MCF 10A (cell line): ENCODE measurements at regions of chr14 and their contacts with region 1.

Region 1: GRCh38 chr14:98957211-98958047 is 314.6 kb downstream of the BCL11B start:
- DNase-seq: peak; percentile 99
- H3K4me3 Mint-ChIP-seq: peak overlapping the region; percentile 70
- H3K27ac Mint-ChIP-seq: peak overlapping the region; percentile 82
- H3K4me1 Mint-ChIP-seq: peaks cover 51% of the 10 kb centered on the region
- H3K27me3 Mint-ChIP-seq: peaks cover 15% of the 10 kb centered on the region
- CTCF ChIP-seq: no peak

Region 2: DNA sequence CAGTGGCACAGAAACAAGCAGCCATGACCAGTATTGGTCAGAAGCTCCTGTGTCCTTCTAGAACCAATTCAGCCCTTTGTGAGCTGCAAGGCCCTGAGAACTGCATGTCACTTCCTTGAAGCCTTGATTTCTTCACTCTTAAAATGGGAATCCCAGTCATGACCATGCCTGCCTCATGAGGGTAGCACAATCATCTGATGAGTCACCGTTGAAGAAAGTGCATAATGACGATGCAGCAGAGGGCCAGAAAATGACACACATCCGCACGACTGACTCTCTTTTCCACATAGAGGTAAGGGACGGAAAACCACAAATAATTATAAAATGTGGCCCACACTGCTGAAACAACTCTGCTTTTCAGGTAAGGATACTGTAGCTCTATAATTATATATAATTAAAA is 462.8 kb before region 1 on chr14:
- CTCF ChIA-PET with region 1: no interaction called
- POLR2A ChIA-PET with region 1: interaction called, 7 read pairs
- intact Hi-C with region 1: loop called (anchors 5 kb)
- DNase-seq: peak; percentile 83
- H3K4me3 Mint-ChIP-seq: no peak overlapping the region
- H3K27ac Mint-ChIP-seq: peak overlapping the region; percentile 77
- H3K4me1 Mint-ChIP-seq: peaks cover 45% of the 10 kb centered on the region
- H3K27me3 Mint-ChIP-seq: no peaks in the 10 kb centered on the region
- CTCF ChIP-seq: no peak

Region 3: GRCh38 chr14:98906123-98906995 is 51.1 kb before region 1 on chr14:
- CTCF ChIA-PET with region 1: interaction called, 3 read pairs
- POLR2A ChIA-PET with region 1: interaction called, 36 read pairs
- intact Hi-C with region 1: loop called (anchors 2 kb)
- DNase-seq: peak; percentile 96
- H3K4me3 Mint-ChIP-seq: peak overlapping the region; percentile 28
- H3K27ac Mint-ChIP-seq: peak overlapping the region; percentile 80
- H3K4me1 Mint-ChIP-seq: peaks cover 52% of the 10 kb centered on the region
- H3K27me3 Mint-ChIP-seq: no peaks in the 10 kb centered on the region
- CTCF ChIP-seq: no peak

Region 4: GRCh38 chr14:99015833-99016232 is 58.4 kb after region 1 on chr14:
- CTCF ChIA-PET with region 1: no interaction called
- POLR2A ChIA-PET with region 1: no interaction called
- intact Hi-C with region 1: no loop called
- DNase-seq: no peak
- H3K4me3 Mint-ChIP-seq: no peak overlapping the region
- H3K27ac Mint-ChIP-seq: no peak overlapping the region
- H3K4me1 Mint-ChIP-seq: peaks cover 9% of the 10 kb centered on the region
- H3K27me3 Mint-ChIP-seq: no peaks in the 10 kb centered on the region
- CTCF ChIP-seq: no peak

Region 5: DNA sequence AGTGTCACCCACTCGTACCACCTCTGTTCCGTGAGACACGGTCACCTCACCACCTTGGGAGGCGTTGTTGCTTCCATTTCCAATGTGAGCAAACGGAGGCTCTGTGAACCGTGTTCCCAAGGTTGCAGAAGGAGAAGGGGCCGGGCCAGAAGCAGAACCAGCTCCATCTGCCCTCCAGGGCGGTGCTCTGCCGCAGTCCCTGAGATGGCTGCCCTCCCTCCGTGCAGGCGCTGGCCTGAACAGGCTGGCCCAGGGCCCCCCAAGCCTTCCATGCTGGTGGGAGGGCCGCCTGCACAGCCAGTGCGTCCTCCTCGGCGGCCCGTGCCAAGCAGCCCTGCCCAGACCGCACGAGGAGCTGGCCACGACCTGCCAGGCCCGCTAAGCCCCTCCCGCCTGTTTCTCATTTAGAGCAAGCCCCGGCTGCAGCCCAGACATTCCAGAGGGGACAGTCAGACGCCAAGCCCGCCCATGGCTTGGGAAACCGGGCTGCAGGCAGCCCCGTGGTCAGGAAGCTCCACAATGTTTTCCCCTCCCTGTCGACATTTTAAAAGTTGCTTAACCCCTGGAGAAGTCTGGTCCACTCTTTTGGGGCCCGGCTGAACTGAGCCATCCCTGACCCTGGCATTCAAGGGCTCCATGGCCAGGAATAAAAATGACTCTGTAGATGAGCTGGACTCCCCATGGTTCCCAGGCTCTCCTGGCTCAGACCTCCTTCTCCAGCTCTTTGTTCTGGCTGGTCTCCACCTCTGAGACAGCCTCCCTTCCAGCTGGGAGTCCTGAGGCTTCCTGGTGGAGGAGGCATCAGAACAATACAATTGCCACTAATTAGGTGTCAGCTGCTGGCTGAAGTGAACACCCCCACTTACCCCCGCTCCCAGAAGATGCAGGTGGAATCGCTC is 78.5 kb after region 1 on chr14:
- CTCF ChIA-PET with region 1: interaction called, 5 read pairs
- POLR2A ChIA-PET with region 1: interaction called, 14 read pairs
- intact Hi-C with region 1: loop called (anchors 5 kb)
- DNase-seq: peak; percentile 96
- H3K4me3 Mint-ChIP-seq: peak overlapping the region; percentile 25
- H3K27ac Mint-ChIP-seq: peak overlapping the region; percentile 79
- H3K4me1 Mint-ChIP-seq: peaks cover 17% of the 10 kb centered on the region
- H3K27me3 Mint-ChIP-seq: no peaks in the 10 kb centered on the region
- CTCF ChIP-seq: no peak

Region 6: GRCh38 chr14:99075061-99075460 is 117.6 kb after region 1 on chr14:
- CTCF ChIA-PET with region 1: no interaction called
- POLR2A ChIA-PET with region 1: no interaction called
- intact Hi-C with region 1: no loop called
- DNase-seq: no peak
- H3K4me3 Mint-ChIP-seq: no peak overlapping the region
- H3K27ac Mint-ChIP-seq: no peak overlapping the region
- H3K4me1 Mint-ChIP-seq: peaks cover 8% of the 10 kb centered on the region
- H3K27me3 Mint-ChIP-seq: no peaks in the 10 kb centered on the region
- CTCF ChIP-seq: no peak

Region 7: DNA sequence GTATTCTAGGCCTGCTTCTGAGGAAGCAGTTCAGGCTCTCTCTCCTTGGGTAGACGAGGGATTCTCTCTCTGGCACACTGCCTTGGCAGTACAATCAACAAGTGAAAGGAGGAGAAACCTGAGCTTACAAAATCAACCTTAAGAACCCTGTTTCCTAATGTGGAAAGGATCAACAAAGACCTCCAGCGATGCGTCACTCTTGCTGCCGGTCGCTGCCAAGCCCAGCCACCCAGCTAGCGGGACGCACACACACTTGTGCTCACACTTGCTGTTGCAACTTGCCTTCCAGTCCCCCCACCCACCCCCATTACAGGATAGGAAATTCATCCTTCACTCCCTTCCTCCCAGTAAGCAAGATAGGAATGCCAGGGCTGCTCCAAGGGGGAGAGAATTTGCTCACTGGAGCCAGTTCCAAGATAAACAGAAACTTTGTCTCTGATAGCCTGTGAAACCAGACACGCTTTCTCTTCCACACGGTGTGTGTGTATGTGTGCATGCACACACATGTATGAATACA is 170.3 kb after region 1 on chr14:
- CTCF ChIA-PET with region 1: no interaction called
- POLR2A ChIA-PET with region 1: interaction called, 5 read pairs
- intact Hi-C with region 1: loop called (anchors 5 kb)
- DNase-seq: peak; percentile 95
- H3K4me3 Mint-ChIP-seq: no peak overlapping the region
- H3K27ac Mint-ChIP-seq: peak overlapping the region; percentile 44
- H3K4me1 Mint-ChIP-seq: peaks cover 15% of the 10 kb centered on the region
- H3K27me3 Mint-ChIP-seq: peaks cover 13% of the 10 kb centered on the region
- CTCF ChIP-seq: no peak